PC-3 (cell line): ENCODE measurements at regions of chr12 and their contacts with region 1.

Region 1: DNA sequence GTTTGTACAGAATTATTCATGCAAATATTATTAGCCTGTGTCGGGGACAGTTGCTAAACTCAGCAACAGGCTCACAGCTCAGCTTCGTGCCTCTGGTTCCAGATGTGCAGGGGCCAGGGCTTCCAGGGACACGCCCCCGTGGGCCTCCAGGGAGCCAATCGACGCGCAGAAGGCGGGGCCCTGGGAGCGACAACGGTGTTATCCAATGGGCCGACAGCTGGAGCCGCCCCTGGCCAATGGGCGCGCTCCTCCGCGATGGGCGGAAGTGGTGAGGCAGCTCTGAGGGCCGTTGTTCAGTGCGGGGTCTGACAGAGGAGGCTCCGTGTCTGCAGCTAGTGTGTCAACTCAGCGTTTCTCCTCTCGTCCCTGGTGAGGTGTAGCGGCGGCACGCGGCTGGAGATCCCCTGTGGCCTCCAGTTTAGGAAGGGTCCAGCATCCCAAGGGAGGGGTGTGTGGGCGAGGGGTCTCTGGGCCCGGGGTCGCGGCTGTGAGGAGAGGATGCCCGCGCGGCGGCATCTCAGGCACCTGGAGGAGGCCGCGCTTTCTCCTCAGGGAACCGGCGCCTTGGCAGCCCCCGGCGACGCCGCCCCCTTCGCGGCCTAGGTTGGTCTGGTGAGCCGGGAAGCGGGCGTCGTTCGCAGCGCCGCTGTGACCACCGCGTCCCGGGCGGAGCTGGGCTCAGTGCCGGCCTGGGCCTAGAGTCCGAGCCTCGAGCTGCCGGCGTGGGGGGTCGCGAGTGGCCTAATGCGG is at the start of gene TRAFD1:
- DNase-seq: peak; percentile 99
- ATAC-seq: peak; percentile 93
- H3K4me3 ChIP-seq: peak within 1 kb of the TSS; percentile 78
- H3K27ac ChIP-seq: peak within 1 kb of the TSS; percentile 9; the same call in 1 of the 2 replicates
- H3K4me1 ChIP-seq: peaks cover 28% of the 10 kb centered on the region
- H3K27me3 ChIP-seq: no peaks in the 10 kb centered on the region
- CTCF ChIP-seq: no peak
- total RNA-seq, gene TRAFD1: 33.9 and 34.1 TPM in 2 replicates

Region 2: GRCh38 chr12:110280779-110281548 is 1844.5 kb before region 1 on chr12 and contains the start of gene ATP2A2:
- CTCF ChIA-PET with region 1: no interaction called
- POLR2A ChIA-PET with region 1: interaction called, 13 read pairs
- intact Hi-C with region 1: no loop called
- DNase-seq: peak; percentile 96
- ATAC-seq: peak; percentile 73
- H3K4me3 ChIP-seq: peak within 1 kb of the TSS; percentile 85
- H3K27ac ChIP-seq: peak within 1 kb of the TSS; percentile 84
- H3K4me1 ChIP-seq: peaks cover 39% of the 10 kb centered on the region
- H3K27me3 ChIP-seq: no peaks in the 10 kb centered on the region
- CTCF ChIP-seq: no peak
- total RNA-seq, gene ATP2A2: 174 and 211 TPM in 2 replicates

Region 3: DNA sequence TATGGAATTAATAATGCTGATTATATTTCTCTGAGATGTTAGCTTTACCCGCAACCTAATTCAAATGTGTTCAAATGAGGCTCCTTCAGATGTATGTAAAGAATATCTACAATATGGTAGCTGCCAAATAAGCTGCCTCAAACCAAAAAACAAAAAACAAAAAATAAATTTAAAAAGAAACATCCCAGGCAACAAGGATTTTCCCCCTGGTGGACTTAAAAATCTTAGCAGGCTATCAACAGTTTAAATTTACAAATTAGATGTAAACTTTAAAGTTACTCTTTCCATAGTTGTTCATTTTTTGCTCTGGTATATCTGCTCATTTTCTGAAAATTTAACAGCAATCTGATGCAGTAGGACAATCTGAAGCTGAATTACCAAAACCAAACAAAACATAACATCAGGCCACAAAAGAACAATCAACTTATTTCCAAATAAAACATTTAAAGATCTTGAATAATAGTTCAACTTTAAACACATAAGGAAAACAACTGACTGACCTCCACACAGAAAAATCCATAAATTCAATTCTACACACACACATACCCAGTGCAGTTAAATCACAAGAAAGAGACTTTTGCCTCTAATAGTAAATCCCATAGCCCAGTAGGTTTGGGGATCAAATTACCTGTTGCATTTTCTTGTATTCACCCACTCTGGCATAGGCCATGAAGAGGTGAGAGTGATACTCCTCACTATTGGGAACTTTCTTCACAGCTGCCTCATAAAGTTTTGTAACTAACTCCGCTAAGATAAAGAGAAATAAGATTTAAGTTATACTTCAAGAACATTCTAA is 38.2 kb before region 1 on chr12:
- CTCF ChIA-PET with region 1: no interaction called
- POLR2A ChIA-PET with region 1: no interaction called
- intact Hi-C with region 1: loop called (anchors 1 kb)
- DNase-seq: no peak
- ATAC-seq: peak; percentile 27
- H3K4me3 ChIP-seq: no peak overlapping the region
- H3K27ac ChIP-seq: no peak overlapping the region
- H3K4me1 ChIP-seq: peaks cover 6% of the 10 kb centered on the region
- H3K27me3 ChIP-seq: no peaks in the 10 kb centered on the region
- CTCF ChIP-seq: peak; percentile 57

Region 4: DNA sequence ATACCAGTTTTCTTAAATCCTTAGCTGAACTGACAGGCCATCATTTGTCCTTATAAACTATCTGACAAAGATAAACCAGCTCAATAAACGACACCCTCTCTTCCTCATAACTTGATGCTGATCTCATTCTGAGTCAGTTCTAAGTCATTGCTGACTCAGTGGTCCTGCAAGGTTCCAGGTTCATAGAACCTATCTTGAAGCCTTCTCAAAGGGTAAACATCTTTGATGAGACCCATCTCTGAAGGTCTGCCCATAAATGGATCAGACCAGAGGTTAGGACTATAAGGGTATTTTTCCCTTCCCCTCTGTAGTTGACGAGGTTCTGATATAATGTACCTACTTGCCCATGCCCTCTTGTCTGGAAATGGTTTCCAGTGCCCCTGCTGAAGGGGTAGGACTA is 28.8 kb before region 1 on chr12:
- CTCF ChIA-PET with region 1: no interaction called
- POLR2A ChIA-PET with region 1: interaction called, 13 read pairs
- intact Hi-C with region 1: loop called (anchors 1 kb)
- DNase-seq: peak; percentile 100
- ATAC-seq: peak; percentile 87
- H3K4me3 ChIP-seq: no peak overlapping the region; the same call in 1 of the 2 replicates
- H3K27ac ChIP-seq: peak overlapping the region; percentile 76
- H3K4me1 ChIP-seq: peaks cover 31% of the 10 kb centered on the region
- H3K27me3 ChIP-seq: no peaks in the 10 kb centered on the region
- CTCF ChIP-seq: no peak

Region 5: DNA sequence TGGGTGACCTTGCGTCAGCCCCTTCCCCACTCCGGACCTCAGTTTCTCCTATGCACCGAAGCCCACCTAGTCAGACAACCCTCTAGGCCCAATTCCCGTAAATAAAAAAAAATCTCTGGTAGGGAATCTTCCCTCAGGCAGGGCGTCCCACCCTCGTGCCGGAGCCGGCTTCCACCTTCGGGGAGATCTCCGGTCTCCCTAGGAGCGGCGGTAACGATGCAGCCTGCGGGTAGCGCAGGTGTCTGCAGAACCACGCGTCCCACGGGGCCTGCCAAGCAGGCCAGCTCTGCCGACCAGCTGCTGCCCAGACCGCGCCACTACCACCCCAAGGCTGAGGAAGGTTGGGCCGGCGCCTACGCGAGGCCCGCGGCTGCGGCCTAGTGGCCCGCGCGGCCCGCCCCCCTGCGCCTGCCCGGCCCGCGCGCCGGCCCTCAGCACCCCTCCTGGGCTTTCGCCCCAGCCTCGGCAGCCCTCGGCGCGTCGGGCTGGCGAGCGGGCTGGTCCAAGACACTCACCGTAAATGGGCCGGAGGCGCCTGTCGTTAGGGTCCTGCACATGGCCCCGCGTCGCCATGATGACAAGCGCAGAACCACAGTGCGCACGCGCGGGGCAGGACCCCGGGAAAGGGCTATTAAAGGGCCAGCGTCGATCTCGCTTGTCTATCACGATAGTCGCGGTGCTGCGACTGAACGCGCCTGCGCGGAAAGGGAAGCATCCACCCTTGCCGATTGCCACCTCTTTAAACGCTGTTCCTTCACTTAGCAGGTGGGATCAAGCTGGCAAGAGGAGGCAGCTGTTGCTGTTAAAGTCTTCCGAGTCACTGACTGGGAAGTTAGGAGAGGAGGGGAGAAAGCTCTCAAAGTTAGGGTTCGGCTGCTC is 17.0 kb before region 1 on chr12 and contains the start of gene NAA25:
- CTCF ChIA-PET with region 1: interaction called, 17 read pairs
- POLR2A ChIA-PET with region 1: interaction called, 13 read pairs
- intact Hi-C with region 1: no loop called
- DNase-seq: peak; percentile 95
- ATAC-seq: peak; percentile 50
- H3K4me3 ChIP-seq: peak within 1 kb of the TSS; percentile 83
- H3K27ac ChIP-seq: peak within 1 kb of the TSS; percentile 88
- H3K4me1 ChIP-seq: peaks cover 41% of the 10 kb centered on the region
- H3K27me3 ChIP-seq: no peaks in the 10 kb centered on the region
- CTCF ChIP-seq: no peak
- total RNA-seq, gene NAA25: 33.3 and 36.6 TPM in 2 replicates

Region 6: GRCh38 chr12:112148031-112148513 is 22.6 kb after region 1 on chr12:
- CTCF ChIA-PET with region 1: no interaction called
- POLR2A ChIA-PET with region 1: no interaction called
- intact Hi-C with region 1: loop called (anchors 2 kb)
- DNase-seq: peak; percentile 89
- ATAC-seq: peak; percentile 31
- H3K4me3 ChIP-seq: no peak overlapping the region
- H3K27ac ChIP-seq: peak overlapping the region; percentile 67
- H3K4me1 ChIP-seq: peaks cover 32% of the 10 kb centered on the region
- H3K27me3 ChIP-seq: no peaks in the 10 kb centered on the region
- CTCF ChIP-seq: no peak

Region 7: GRCh38 chr12:112167718-112168525 is 42.5 kb after region 1 on chr12:
- CTCF ChIA-PET with region 1: no interaction called
- POLR2A ChIA-PET with region 1: interaction called, 13 read pairs
- intact Hi-C with region 1: no loop called
- DNase-seq: no peak
- ATAC-seq: no peak
- H3K4me3 ChIP-seq: no peak overlapping the region
- H3K27ac ChIP-seq: no peak overlapping the region
- H3K4me1 ChIP-seq: no peaks in the 10 kb centered on the region
- H3K27me3 ChIP-seq: no peaks in the 10 kb centered on the region
- CTCF ChIP-seq: no peak

Region 8: DNA sequence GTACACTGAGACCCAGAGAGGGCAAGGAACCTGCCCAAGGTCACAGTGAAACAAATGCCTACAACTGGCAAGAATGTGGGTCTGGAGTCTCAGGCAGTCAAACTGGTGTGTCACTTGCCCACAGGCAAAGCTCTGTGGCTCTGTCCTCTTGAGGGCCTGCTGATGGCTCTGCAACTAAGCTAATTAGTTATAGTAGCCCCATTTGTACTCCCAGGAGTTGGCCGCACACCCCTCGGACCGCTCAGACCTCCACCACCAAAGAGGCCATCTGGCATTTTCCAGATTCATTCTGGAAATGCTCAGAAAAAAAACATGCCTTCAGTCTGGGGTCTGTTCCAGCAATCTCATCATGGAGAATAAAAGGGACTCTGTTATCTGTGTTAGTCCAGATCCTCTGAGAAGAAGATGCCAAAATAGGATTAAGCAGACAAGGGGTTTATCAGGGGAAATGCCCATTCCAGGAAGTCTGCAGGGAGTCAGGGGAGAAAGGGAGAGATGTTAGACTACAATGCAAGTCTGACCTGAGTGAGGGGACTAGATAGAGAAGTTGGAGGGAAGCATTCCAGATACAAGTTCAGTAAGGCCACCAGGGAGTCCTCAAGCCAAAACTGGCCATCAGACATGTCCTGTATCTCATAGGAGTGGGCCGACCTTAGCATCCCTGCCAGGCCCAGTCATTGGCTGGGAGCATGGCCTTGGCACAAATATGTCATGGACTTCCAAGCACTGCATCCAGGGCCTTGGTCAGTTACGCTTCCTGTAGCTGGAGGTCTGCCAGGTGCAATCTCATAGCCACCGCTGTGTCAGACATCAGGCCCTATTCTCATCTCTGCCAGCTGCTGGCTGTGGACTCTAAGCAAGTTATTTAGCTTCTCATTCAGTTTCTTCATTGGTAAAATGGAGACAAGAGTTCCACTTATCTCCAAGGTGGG is 765.9 kb after region 1 on chr12:
- CTCF ChIA-PET with region 1: no interaction called
- POLR2A ChIA-PET with region 1: no interaction called
- intact Hi-C with region 1: no loop called
- DNase-seq: no peak
- ATAC-seq: no peak
- H3K4me3 ChIP-seq: no peak overlapping the region
- H3K27ac ChIP-seq: no peak overlapping the region
- H3K4me1 ChIP-seq: no peaks in the 10 kb centered on the region
- H3K27me3 ChIP-seq: peaks cover 24% of the 10 kb centered on the region
- CTCF ChIP-seq: no peak